Aorta (tissue), 5 donors: ENCODE measurements at regions of chr13 and their contacts with region 1.

Region 1: GRCh38 chr13:29513397-29514322 is 81.8 kb downstream of the SLC7A1 start:
- DNase-seq: no peak
- ATAC-seq: no peak
- H3K4me3 ChIP-seq: no peak overlapping the region
- H3K27ac ChIP-seq: no peak overlapping the region
- H3K4me1 ChIP-seq: no peaks in the 10 kb centered on the region
- H3K27me3 ChIP-seq: no peaks in the 10 kb centered on the region

Region 2: DNA sequence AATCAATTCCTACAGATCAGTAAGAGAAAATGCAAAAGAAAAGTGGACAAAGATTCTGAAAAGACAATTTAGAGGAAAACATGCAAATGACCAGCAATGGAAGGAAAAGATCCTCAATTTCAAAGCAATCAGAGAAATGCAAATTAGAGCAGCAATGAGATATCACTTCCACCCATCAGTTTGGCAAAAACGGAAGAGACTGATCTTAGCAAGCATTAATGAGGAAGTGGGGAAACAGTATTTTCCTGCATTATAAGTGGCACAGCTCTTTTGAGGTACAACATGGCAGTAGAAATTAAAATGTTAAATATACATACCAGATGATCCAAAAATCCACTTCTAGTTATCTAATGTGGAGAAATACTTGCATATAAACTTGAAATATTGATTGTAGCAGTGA is 150.9 kb after region 1 on chr13:
- intact Hi-C with region 1: no loop called
- DNase-seq: no peak
- ATAC-seq: no peak
- H3K4me3 ChIP-seq: no peak overlapping the region
- H3K27ac ChIP-seq: no peak overlapping the region
- H3K4me1 ChIP-seq: no peaks in the 10 kb centered on the region
- H3K27me3 ChIP-seq: no peaks in the 10 kb centered on the region

Region 3: DNA sequence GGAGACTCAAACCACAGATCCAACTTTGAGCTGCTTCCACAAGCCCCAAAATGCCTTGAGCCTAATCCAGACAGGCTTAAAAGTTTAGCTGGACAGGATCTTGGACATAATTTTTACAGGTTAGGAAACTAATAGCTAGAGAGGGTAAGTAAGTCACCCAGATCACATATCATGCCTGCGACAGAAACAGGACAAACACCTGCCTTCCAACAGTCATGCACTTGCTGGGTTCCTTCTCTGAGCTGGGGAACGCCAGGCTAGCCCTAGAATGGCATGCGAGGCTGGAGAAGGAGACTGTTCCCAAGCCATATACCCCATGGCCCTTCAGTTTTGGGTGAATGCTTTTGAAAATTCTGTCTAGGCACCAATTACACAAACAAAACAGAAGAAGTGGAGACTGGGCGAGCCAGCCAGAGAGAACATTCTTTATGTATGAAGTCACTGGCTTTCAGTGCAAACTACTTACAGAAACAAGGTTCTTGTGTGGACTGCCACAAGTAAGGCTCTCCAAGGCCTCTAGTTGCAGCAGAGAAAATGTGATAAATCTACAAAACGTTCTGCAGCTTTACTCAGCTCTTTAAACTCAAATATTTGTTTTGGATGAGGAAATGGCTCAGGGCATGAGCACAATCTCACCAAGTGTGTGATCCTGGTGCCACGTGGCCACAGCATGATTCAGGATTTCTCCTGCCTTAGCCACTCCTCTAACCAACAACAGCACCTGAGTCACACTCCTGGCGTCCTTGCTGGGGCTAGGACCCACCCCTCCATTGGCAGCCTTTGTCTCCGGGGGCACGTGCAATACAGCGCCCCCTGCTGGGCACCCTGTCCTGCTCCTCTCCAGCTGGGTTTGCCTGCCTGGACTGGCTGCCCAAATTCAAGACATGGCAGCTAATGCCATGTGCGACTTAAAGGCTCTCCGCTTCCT is 410.2 kb after region 1 on chr13:
- intact Hi-C with region 1: loop called in 1 of 2 experiments (anchors 10 kb)
- DNase-seq: peak; percentile 93 to 94
- ATAC-seq: peak; percentile 93
- H3K4me3 ChIP-seq: no peak overlapping the region
- H3K27ac ChIP-seq: peak overlapping the region; percentile 92 to 100
- H3K4me1 ChIP-seq: peaks cover 0 to 9% of the 10 kb centered on the region in 2 donors
- H3K27me3 ChIP-seq: no peaks in the 10 kb centered on the region